ENCODE measurements at regions of chr6 and their contacts with region 1.

Region 1: GRCh38 chr6:87929843-87930288 is 117.8 kb upstream of the SPACA1 start:
- DNase-seq: peak; percentile 87

Region 2: DNA sequence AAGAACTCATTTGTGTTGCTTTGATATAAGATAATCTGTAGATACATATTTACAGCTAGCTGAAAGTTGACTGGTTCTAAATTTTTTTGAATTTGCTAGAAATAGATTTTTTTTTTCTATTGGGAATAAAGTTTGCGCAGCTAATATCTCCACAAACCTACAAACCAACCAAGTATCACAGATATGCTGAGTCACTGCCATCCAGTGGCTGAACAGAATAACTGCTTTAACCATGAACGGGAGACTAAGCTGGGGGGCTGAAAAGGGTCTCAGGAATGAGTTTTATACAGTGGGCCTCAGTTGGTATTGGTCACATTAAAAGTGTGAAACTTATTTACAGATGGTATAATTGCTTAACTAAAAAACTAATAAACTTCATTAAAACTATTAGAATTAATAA is 563.0 kb after region 1 on chr6:
- intact Hi-C with region 1: loop called (anchors 10 kb)
- DNase-seq: no peak

Region 3: GRCh38 chr6:88780714-88781389 is 851.0 kb after region 1 on chr6:
- intact Hi-C with region 1: loop called (anchors 10 kb)
- DNase-seq: no peak

Region 4: DNA sequence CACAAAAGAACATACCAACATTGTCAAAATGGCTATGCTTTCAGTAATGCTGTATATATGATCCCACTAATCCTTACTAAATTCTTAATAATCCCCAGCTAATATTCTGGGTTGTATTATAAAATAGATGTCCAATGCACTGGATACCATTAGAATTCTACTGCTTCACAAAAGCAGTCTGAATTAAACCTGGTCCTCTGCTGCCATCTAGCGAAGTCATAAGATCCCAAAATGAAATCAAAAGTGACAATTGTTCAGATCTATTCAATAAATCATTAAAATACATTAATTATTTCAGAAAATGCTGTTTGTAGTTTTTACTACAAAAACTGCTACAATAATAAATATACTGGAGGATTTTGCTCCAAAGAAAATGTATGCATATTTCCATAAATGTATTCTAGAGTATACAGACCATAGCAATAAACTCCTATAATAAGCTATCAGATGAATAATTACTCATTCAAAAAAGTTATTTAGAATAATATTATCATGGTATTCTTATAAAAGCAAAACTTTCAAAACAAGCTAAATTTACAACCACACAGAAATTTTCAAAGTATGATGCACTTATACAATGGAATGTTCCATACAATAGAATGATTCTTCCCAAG is 941.0 kb after region 1 on chr6:
- intact Hi-C with region 1: loop called (anchors 5 kb)
- DNase-seq: no peak

Measured in cardiac septum (tissue), 1 donor.